ENCODE measurements at regions of chr3 and their contacts with region 1.

Region 1: GRCh38 chr3:94062431-94063404 is at the starts of genes DHFR2 and NSUN3:
- ATAC-seq: peak; percentile 91 to 97 (median 96)
- H3K4me3 ChIP-seq: peak within 1 kb of the TSS; percentile 63 to 97 (median 92)
- H3K27ac ChIP-seq: peak within 1 kb of the TSS; percentile 96 to 99
- H3K4me1 ChIP-seq: peaks cover 4 to 11% of the 10 kb centered on the region in 2 donors
- total RNA-seq, gene DHFR2: 4.5 to 12.5 (median 7.9) TPM
- total RNA-seq, gene NSUN3: 9.1 to 20.7 (median 13.7) TPM

Region 2: DNA sequence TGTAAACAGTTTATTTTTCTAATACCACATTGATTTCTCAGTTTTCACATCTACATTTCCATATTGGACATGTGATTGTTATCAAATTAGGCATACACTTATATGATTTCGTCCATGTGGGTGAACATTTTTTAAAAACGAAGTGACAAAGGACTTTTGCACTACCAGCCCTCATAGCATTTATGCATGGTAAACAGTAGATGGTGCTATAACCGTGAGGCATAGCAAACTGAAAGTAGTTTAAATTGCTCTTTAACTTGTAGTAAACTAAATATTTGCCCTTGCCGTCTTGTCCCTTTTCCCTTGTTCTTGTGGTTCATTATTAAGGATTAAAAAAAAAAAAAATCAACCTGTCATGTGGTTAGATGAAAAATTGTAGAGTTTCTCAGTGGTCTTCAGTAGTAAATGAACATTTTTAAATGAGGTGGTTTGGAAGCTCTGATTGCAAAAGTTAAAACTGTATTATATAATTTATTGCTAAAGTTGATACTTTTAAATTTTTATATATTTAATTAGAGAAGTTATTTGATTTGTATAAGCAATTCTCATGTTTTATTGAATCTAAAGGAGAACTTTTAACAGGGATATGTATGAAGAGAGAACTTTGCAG is 58.3 kb before region 1 on chr3:
- in situ Hi-C with region 1: loop called in 1 of 9 experiments (anchors 10 kb)
- ATAC-seq: peak in 4 of 8 experiments; percentile 36 to 75 (median 73)
- H3K4me3 ChIP-seq: no peak overlapping the region
- H3K27ac ChIP-seq: no peak overlapping the region
- H3K4me1 ChIP-seq: no peaks in the 10 kb centered on the region

Region 3: GRCh38 chr3:94249585-94249984 is 186.9 kb after region 1 on chr3:
- in situ Hi-C with region 1: no loop called
- ATAC-seq: peak in 3 of 8 experiments; percentile 83 to 86 (median 84)
- H3K4me3 ChIP-seq: no peak overlapping the region
- H3K27ac ChIP-seq: no peak overlapping the region
- H3K4me1 ChIP-seq: no peaks in the 10 kb centered on the region

Measured in motor neuron (in vitro differentiated cells).